CD8-positive, alpha-beta memory T cell (primary cell): ENCODE measurements at regions of chr20 and their contacts with region 1.

Region 1: DNA sequence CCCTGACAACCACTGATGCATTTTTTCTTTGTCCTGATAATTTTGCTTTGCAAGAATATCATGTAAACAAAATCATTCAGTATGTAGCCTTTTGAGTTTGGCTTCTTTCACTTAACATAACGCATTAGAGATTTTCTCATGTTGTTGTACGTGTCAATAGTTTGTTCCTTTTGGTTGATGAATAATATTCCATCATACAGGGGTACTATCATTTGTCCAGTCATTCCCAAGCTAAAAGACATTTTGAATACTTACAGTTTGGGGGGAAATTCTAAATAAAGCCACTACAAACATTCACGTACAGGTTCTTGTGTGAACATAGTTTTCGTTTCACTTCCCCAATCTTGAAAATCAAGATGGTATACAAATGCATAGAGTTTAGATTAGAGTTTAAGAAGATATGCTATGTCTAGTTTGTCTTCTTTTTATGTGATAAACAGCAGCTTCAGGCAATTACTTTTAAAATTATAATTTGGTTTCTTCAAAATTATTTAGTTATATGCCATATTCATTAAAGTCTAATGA is 5.2 kb downstream of the HAO1 start:
- DNase-seq: no peak
- H3K4me3 ChIP-seq: no peak overlapping the region
- H3K4me3 Mint-ChIP-seq: no peak overlapping the region
- H3K27ac ChIP-seq: no peak overlapping the region
- H3K27ac Mint-ChIP-seq: no peak overlapping the region
- H3K4me1 ChIP-seq: no peaks in the 10 kb centered on the region
- H3K4me1 Mint-ChIP-seq: peaks cover 0 to 5% (median 0%) of the 10 kb centered on the region in 3 donors
- H3K27me3 ChIP-seq: no peaks in the 10 kb centered on the region
- H3K27me3 Mint-ChIP-seq: peaks cover 0 to 45% of the 10 kb centered on the region in 2 donors

Region 2: DNA sequence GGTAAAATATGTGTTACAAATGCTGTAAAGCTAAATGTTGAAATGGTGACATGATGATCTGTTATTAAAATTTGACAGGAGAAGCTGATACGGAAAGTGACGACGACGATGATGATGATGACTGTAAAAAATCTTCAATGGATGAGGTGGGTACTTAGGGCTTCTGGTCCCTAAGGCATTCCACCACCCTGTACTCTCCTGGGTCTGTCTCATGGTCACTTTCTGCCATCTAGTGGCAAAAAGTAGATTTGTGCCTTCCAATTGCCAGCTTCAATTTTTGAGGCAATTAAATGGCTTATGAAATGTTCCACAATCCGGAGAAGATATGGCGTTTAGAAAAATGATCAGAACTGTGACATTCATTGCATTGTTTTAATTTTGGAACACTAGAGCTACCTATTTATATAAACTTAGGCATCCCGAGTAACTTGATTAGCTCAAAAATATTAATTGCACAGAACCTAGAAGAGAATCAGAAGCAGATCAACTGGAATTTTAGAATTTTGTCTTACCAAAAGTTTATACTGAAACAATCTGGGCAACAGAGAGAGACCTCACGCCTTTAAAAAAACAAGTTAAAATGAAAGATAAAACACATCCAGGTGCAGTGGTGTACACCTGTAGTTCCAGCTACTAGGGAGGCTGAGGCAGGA is 787.3 kb after region 1 on chr20:
- CTCF ChIA-PET with region 1: interaction called, 54 read pairs
- POLR2A ChIA-PET with region 1: no interaction called
- DNase-seq: peak in 2 of 5 donors; percentile 11 to 35
- H3K4me3 ChIP-seq: no peak overlapping the region
- H3K4me3 Mint-ChIP-seq: no peak overlapping the region
- H3K27ac ChIP-seq: no peak overlapping the region
- H3K27ac Mint-ChIP-seq: no peak overlapping the region
- H3K4me1 ChIP-seq: no peaks in the 10 kb centered on the region
- H3K4me1 Mint-ChIP-seq: no peaks in the 10 kb centered on the region
- H3K27me3 ChIP-seq: no peaks in the 10 kb centered on the region
- H3K27me3 Mint-ChIP-seq: no peaks in the 10 kb centered on the region